ENCODE measurements at regions of chr20 and their contacts with region 1.

Region 1: GRCh38 chr20:57383447-57384347 is 7.5 kb upstream of the RBM38 start:
- DNase-seq: no peak
- H3K4me3 ChIP-seq: no peak overlapping the region
- CTCF ChIP-seq: no peak

Region 2: GRCh38 chr20:57135856-57136255 is 247.8 kb before region 1 on chr20:
- CTCF ChIA-PET with region 1: no interaction called
- POLR2A ChIA-PET with region 1: no interaction called
- DNase-seq: no peak
- H3K4me3 ChIP-seq: no peak overlapping the region
- CTCF ChIP-seq: no peak

Region 3: GRCh38 chr20:57231951-57232428 is 151.7 kb before region 1 on chr20:
- CTCF ChIA-PET with region 1: no interaction called
- POLR2A ChIA-PET with region 1: no interaction called
- DNase-seq: no peak
- H3K4me3 ChIP-seq: no peak overlapping the region
- CTCF ChIP-seq: no peak

Region 4: GRCh38 chr20:57364451-57364850 is 19.2 kb before region 1 on chr20:
- CTCF ChIA-PET with region 1: interaction called, 17 read pairs
- POLR2A ChIA-PET with region 1: no interaction called
- DNase-seq: no peak
- H3K4me3 ChIP-seq: no peak overlapping the region
- CTCF ChIP-seq: no peak

Region 5: DNA sequence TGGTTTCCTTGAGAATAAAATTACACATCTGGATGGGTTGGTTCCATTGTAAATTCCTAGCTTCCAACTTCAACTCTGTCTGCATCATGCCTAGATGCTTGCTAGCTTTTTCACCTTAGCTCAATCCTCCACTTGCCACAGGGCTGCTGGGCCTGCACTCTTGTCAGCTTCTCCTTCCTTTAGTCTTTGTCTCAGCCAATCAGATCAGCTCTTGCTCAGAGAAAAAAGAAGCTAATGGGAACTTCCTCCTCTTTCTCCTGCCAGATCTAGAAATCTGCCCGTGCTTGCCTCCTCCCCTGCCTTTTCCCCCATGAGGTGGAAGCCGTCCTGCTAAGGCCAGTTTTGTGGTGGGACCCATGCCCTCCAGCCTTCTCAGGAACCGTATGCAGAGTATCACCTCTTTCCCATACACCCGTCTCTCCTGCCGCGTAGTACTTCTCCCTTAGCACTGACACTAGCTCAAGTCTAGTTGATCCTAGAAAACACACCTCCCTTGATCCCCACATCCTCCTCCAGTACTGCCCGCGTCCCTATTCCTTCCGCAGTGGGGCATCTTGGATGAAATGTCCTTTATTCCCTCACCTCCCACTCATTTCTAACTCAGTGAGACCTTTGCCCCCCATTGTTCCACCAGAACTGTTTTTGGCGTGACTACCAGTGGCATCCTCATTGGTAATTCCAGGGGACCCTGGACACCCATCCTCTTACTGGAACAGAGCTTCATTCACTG is 13.9 kb before region 1 on chr20:
- CTCF ChIA-PET with region 1: interaction called, 22 read pairs
- POLR2A ChIA-PET with region 1: no interaction called
- DNase-seq: no peak
- H3K4me3 ChIP-seq: no peak overlapping the region
- CTCF ChIP-seq: no peak

Region 6: DNA sequence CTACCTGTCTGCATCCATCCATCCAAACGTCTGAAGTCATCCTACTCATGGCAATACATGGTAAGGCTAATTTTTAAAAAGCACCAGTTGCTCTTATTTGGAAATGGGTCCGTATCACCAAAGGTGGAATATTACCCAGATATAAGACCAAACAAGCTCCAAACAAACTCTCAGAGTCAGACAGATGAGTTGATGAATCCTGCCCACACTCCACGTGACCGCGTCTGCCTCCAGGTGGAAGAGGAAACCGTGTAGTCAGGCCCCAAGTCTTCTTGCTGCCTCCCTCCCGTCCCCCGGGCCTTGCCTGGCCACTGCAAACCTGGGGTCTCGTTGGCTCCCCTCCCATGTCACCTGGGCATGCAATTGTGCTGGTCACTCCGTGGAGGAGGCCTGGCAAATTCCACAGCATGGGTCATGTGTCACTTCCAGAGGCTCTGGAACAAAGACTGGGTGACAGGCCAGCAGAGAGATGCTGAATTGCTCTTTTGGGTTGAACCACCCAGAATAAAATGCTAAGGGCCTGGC is 109.5 kb after region 1 on chr20:
- CTCF ChIA-PET with region 1: interaction called, 56 read pairs
- POLR2A ChIA-PET with region 1: no interaction called
- DNase-seq: no peak
- H3K4me3 ChIP-seq: no peak overlapping the region
- CTCF ChIP-seq: no peak

Region 7: GRCh38 chr20:57498425-57499400 is 115.0 kb after region 1 on chr20:
- CTCF ChIA-PET with region 1: interaction called, 56 read pairs
- POLR2A ChIA-PET with region 1: no interaction called
- DNase-seq: no peak
- H3K4me3 ChIP-seq: no peak overlapping the region
- CTCF ChIP-seq: peak; percentile 53

Region 8: DNA sequence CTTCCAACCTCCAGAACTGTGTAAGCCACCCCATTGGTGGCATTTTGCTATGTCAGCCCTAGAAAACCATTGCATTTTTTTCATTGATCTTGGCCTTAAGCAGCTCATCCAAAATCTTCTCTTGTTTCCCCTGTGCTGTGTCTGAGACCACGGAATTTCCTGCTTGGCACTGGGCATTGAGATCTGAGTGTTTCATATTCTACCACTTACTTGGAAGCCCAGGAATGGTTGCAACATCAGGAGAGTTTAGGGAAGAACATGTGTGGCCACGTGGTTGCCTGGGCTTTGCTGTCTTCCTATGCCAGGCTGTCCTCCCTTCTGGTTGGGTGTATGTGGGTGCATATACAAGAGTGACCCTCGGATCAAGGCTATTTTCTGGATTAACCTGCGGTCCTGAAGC is 465.4 kb after region 1 on chr20:
- CTCF ChIA-PET with region 1: no interaction called
- POLR2A ChIA-PET with region 1: no interaction called
- DNase-seq: no peak
- H3K4me3 ChIP-seq: no peak overlapping the region
- CTCF ChIP-seq: no peak